ENCODE measurements at regions of chr14 and their contacts with region 1.

Region 1: GRCh38 chr14:64914237-64914971 is at the start of gene CHURC1:
- DNase-seq: peak; percentile 92 to 99
- ATAC-seq: peak; percentile 97 to 99
- H3K4me3 ChIP-seq: peak within 1 kb of the TSS; percentile 98
- H3K27ac ChIP-seq: peak within 1 kb of the TSS; percentile 89 to 99
- H3K4me1 ChIP-seq: peaks cover 30% of the 10 kb centered on the region
- CTCF ChIP-seq: no peak
- EP300 ChIP-seq: no peak
- POLR2A ChIP-seq: peak; percentile 89
- RAD21 ChIP-seq: no peak
- polyA plus RNA-seq, gene CHURC1: 115 and 153 TPM in 2 replicates

Region 2: GRCh38 chr14:64880221-64881121 is 33.9 kb before region 1 on chr14:
- CTCF ChIA-PET with region 1: interaction called, 9 read pairs
- POLR2A ChIA-PET with region 1: interaction called, 10 read pairs
- DNase-seq: peak; percentile 40 to 73
- ATAC-seq: peak; percentile 79 to 91
- H3K4me3 ChIP-seq: peak overlapping the region; percentile 85
- H3K27ac ChIP-seq: peak overlapping the region; percentile 65 to 82
- H3K4me1 ChIP-seq: no peaks in the 10 kb centered on the region
- CTCF ChIP-seq: no peak
- EP300 ChIP-seq: no peak
- POLR2A ChIP-seq: no peak
- RAD21 ChIP-seq: no peak

Region 3: GRCh38 chr14:64899958-64900357 is 14.4 kb before region 1 on chr14:
- CTCF ChIA-PET with region 1: interaction called, 19 read pairs
- POLR2A ChIA-PET with region 1: no interaction called
- DNase-seq: no peak
- ATAC-seq: no peak
- H3K4me3 ChIP-seq: no peak overlapping the region
- H3K27ac ChIP-seq: no peak overlapping the region
- H3K4me1 ChIP-seq: no peaks in the 10 kb centered on the region
- CTCF ChIP-seq: no peak
- EP300 ChIP-seq: no peak
- POLR2A ChIP-seq: no peak
- RAD21 ChIP-seq: no peak

Region 4: DNA sequence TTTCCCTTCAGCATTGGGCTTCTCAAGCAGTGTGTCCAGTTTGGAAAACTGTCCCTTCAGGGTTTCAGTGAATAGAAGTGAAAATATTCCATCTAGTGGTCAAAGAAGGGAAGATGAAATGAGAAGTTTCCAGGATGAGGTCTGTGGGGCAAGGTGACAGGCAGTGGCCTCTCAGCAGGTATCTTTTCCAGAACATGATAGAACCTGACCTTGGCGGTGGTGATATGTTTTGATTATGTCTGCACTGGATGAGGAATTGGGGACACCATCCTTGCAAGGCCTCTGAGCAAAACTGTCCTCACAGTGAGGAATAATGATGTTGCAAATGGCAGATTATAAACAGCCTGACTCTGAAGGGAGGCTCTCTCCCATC is 23.4 kb after region 1 on chr14:
- CTCF ChIA-PET with region 1: interaction called, 11 read pairs
- POLR2A ChIA-PET with region 1: interaction called, 4 read pairs
- DNase-seq: peak; percentile 29 to 48
- ATAC-seq: peak; percentile 53 to 65
- H3K4me3 ChIP-seq: no peak overlapping the region
- H3K27ac ChIP-seq: peak overlapping the region; percentile 51 to 77
- H3K4me1 ChIP-seq: peaks cover 68% of the 10 kb centered on the region
- CTCF ChIP-seq: peak; percentile 49
- EP300 ChIP-seq: no peak
- POLR2A ChIP-seq: no peak
- RAD21 ChIP-seq: peak; percentile 44 to 57; a peak in 4 of 5 replicates

Measured in A549 (cell line).